Right cardiac atrium (tissue), 5 donors: ENCODE measurements at regions of chr11 and their contacts with region 1.

Region 1: DNA sequence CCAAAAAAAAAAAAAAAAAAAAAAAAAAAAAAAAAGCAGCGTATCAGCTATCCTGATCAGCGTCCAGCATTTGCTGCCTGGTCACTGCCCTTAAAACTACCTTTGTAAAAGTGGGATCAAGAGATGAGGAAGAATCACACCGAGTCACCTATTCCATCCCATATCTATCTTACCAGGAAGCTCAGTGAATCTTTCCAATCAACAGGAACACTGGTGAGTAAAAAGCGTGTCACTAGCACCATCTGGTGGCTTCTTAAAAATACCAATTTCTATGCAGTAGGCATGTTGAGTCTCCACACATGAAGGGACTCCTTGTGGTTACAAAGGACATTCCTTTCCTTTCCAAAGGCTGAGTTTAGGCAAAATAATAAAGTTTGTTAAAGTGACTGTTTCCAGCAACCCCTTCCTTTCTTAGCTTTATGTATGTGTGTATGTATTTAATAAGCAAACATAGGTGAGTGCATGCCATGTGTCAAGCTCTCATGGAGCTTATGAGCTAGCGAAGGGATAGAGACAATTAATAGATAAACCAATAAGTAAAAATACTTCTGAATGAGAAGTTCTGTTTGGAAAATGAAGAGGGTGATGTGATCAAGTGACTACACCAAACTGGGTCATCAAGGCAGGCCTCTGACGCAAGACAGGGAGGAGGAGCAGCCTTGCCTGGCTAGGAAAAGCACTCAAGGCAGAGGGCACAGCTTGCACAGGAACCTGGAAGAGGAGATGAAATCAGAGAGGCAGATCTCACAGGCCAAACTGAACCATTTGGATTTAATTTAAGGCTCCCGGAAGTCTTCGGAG is 13.9 kb upstream of the TP53AIP1 start:
- DNase-seq: no peak
- ATAC-seq: peak; percentile 83 to 84
- H3K4me3 ChIP-seq: no peak overlapping the region
- H3K27ac ChIP-seq: no peak overlapping the region
- H3K4me1 ChIP-seq: no peaks in the 10 kb centered on the region
- H3K27me3 ChIP-seq: no peaks in the 10 kb centered on the region

Region 2: DNA sequence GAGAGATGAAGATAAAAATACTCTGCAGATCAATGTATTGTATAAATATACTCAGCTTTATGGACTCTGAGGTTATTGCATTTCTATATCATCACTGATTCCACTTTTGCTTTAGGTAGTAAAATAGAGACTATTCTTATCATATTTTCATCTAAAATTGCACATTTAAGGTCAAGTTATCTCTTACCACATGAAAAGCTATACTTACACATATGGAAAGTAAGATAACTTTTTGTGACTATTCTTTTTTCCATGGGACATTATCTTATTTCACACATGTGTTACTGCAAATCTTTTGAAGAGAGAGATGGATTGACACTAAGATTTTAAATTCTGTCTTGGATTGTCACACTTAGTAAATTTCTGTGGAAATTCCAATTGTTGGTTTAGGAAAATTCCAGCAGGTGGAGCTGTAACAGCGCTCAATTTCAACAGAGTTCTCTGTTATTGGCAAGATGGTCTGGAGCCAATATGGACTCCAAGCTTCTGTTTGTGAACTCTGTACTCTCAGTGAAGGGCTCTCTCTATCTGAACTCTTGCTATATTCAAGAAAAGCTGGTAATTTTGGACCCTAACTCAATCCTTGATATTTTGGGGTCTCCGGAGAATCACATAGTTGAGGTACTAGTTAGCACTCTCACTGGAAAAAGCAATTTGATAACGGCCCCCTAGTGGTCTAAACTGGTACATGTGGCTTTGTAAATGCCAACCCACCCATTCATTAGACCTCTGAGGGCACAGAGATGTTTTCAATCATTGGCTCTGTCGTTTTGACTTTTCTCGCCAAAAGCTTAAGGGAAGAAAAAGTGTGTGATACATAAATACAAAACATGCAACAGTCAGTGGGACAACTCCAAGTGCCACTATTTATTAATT is 798.9 kb before region 1 on chr11:
- intact Hi-C with region 1: loop called in 1 of 4 experiments (anchors 10 kb)
- DNase-seq: no peak
- ATAC-seq: peak; percentile 80 to 87
- H3K4me3 ChIP-seq: peak overlapping the region; percentile 25
- H3K27ac ChIP-seq: no peak overlapping the region
- H3K4me1 ChIP-seq: no peaks in the 10 kb centered on the region
- H3K27me3 ChIP-seq: no peaks in the 10 kb centered on the region

Region 3: GRCh38 chr11:128405714-128406662 is 550.6 kb before region 1 on chr11:
- intact Hi-C with region 1: no loop called
- DNase-seq: peak in 1 of 3 donors; percentile 41
- ATAC-seq: peak; percentile 52 to 62
- H3K4me3 ChIP-seq: no peak overlapping the region
- H3K27ac ChIP-seq: no peak overlapping the region
- H3K4me1 ChIP-seq: peaks cover 5% of the 10 kb centered on the region
- H3K27me3 ChIP-seq: no peaks in the 10 kb centered on the region

Region 4: GRCh38 chr11:128686745-128687177 is 269.8 kb before region 1 on chr11:
- intact Hi-C with region 1: no loop called
- DNase-seq: peak; percentile 62 to 82 (median 81)
- ATAC-seq: peak; percentile 70 to 81
- H3K4me3 ChIP-seq: peak overlapping the region; percentile 34
- H3K27ac ChIP-seq: no peak overlapping the region
- H3K4me1 ChIP-seq: peaks cover 3% of the 10 kb centered on the region
- H3K27me3 ChIP-seq: no peaks in the 10 kb centered on the region

Region 5: DNA sequence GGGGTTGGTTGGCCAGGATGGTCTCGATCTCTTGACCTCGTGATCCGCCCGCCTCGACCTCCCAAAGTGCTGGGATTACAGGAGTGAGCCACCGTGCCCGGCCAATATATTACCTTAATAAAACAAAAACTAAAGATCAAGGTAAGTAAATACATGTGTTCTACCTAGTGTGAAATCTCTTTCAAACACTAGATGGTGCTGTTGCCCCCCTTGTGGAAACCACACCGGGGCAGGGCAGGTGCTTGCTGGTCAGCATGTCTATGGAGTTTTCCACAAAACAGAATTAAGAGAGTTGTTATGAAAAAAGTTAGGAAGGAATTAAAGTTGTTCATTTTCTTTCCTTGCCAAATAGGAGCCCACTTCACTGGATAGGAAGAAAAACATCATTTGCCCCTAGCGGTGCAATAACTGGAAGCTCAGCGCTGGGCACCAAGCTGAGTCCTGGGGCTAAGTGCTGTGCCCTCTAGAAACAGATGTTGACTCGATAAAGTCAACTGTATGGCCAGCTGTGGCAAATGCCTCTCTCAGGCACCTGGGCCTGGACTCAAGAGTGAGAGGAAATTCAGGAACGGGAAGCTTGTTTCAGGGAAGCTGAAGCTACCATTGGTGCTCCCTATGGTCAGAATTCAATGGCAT is 71.8 kb before region 1 on chr11:
- intact Hi-C with region 1: loop called (anchors 2 to 5 kb)
- DNase-seq: peak in 2 of 3 donors; percentile 48 to 61
- ATAC-seq: peak; percentile 67 to 77
- H3K4me3 ChIP-seq: no peak overlapping the region
- H3K27ac ChIP-seq: no peak overlapping the region
- H3K4me1 ChIP-seq: no peaks in the 10 kb centered on the region
- H3K27me3 ChIP-seq: no peaks in the 10 kb centered on the region